PC-9 (cell line): ENCODE measurements at regions of chr12 and their contacts with region 1.

Region 1: GRCh38 chr12:76020731-76021672 is 10.6 kb downstream of the PHLDA1 start:
- DNase-seq: peak; percentile 58 to 95
- H3K4me3 ChIP-seq: peak overlapping the region; percentile 55
- H3K27ac ChIP-seq: peak overlapping the region; percentile 100
- H3K4me1 ChIP-seq: peaks cover 79% of the 10 kb centered on the region
- H3K27me3 ChIP-seq: no peaks in the 10 kb centered on the region
- CTCF ChIP-seq: no peak

Region 2: DNA sequence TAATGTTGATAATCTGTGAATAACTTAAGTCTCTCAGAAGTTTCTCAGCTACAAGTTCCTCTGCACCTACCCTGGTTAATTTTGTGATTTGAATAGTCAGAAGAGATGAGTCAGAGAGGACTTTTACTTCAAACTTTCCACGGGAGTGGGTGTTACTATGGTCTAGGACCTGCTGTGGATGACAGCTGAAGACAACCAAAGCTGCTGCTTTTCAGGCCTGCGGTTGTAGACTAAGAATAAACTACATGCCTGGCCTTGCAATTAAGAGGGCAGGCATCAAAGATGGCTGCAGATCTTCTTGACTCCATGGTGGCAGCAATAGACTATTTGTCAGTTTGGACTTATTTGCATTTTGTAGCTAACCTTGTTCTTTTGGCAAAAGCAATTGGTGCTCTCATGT is 282.5 kb before region 1 on chr12:
- CTCF ChIA-PET with region 1: no interaction called
- POLR2A ChIA-PET with region 1: interaction called, 11 read pairs
- intact Hi-C with region 1: no loop called
- DNase-seq: no peak
- H3K4me3 ChIP-seq: no peak overlapping the region
- H3K27ac ChIP-seq: no peak overlapping the region
- H3K4me1 ChIP-seq: no peaks in the 10 kb centered on the region
- H3K27me3 ChIP-seq: no peaks in the 10 kb centered on the region
- CTCF ChIP-seq: no peak

Region 3: DNA sequence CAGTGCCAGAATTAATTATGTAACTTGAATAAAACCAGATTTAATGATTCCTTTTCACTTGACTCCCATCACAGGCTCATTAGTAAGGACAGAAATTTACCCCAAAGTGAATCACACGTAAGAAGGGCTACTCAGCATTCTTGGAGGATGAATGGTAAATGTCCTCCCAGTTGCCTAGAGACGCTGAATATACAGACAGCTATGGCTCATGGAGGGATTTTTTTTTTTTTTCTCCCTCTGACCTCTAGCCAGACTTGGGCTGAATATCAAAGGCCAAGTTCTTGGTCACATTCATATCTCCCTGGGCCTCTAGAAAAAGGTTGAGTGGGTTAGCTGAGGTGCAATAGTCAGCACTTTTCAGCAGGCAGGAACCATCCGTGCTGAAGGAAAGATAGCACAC is 67.0 kb before region 1 on chr12:
- CTCF ChIA-PET with region 1: no interaction called
- POLR2A ChIA-PET with region 1: interaction called, 15 read pairs
- intact Hi-C with region 1: loop called (anchors 1 kb)
- DNase-seq: peak; percentile 57 to 99
- H3K4me3 ChIP-seq: peak overlapping the region; percentile 19; the same call in 1 of the 2 replicates
- H3K27ac ChIP-seq: peak overlapping the region; percentile 97
- H3K4me1 ChIP-seq: peaks cover 67% of the 10 kb centered on the region
- H3K27me3 ChIP-seq: no peaks in the 10 kb centered on the region
- CTCF ChIP-seq: no peak

Region 4: DNA sequence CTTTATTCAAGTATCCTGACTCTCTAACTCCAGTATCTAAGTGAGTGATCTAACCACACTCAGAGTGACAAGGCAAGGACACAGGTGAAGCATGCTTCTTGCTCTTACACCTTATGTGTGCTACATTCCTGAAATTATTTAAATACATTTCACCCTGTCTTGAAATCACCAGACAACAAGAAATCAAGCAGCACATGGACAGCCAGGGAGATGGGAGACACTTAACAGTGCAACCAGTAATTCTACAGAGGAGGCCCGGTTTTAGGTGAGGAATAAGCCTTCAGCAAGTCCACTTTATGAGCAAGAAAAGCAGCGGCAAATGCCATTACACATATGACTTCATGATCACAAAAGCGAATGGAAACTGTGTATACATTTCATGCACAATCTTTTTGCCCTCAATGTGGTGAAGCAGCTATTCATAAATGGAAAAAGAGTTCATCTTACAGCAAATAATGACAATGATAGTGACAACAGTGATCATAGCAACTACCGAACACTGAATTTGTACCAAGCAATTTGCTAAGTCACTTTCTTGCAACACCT is 26.7 kb before region 1 on chr12:
- CTCF ChIA-PET with region 1: interaction called, 8 read pairs
- POLR2A ChIA-PET with region 1: no interaction called
- intact Hi-C with region 1: loop called (anchors 1 kb)
- DNase-seq: peak; percentile 31 to 87
- H3K4me3 ChIP-seq: no peak overlapping the region
- H3K27ac ChIP-seq: peak overlapping the region; percentile 81
- H3K4me1 ChIP-seq: peaks cover 63% of the 10 kb centered on the region
- H3K27me3 ChIP-seq: no peaks in the 10 kb centered on the region
- CTCF ChIP-seq: no peak

Region 5: DNA sequence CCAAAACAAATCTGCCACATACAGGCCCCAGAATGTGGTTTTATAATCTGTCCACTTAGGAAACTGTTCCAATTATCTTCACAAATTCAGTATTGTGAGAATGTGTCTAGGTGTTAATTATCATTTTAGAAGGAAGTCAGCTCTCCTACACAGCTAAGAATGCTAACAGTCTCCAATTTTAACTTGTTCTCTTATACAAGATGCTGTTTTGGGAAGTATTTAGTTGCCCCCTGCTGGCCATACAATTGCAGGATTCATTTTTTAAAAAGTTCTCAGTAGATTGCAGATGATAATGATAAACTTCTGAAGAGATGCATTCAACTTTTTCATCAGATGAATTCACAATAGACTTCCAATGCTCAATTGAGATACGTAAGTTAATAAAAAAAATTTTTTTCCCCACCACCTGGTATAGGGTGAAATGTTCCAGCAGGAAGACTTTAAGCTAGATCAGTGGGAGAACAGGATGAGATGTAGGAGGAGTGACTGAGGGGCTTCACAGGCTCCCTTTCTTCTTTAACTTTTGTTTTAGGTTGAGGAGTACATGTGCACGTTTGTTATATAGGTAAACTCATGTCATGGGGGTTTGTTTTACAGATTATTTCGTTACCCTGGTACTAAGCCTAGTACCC is 565.9 kb after region 1 on chr12:
- CTCF ChIA-PET with region 1: no interaction called
- POLR2A ChIA-PET with region 1: interaction called, 12 read pairs
- intact Hi-C with region 1: no loop called
- DNase-seq: peak in 1 of 2 experiments; percentile 10
- H3K4me3 ChIP-seq: no peak overlapping the region
- H3K27ac ChIP-seq: no peak overlapping the region
- H3K4me1 ChIP-seq: no peaks in the 10 kb centered on the region
- H3K27me3 ChIP-seq: no peaks in the 10 kb centered on the region
- CTCF ChIP-seq: peak; percentile 82

Region 6: DNA sequence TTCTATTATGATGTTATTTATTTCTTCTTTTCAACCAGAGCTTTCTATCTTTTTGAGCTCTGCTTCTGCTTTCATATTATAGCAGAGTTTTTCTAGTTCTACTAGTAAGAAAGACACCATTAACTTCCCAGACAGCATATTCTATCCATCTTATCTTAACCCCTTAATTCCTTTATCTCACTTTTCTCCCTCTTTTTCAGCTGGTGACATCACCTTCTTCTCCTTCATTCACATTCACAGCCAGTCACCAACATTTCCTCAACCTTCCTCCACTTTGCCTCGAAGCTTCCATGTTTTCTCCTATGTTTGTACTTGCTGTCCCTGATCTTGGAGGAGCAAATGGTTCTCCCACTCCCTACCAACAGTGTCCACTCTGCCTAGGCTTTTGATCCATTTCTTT is 861.4 kb after region 1 on chr12:
- CTCF ChIA-PET with region 1: no interaction called
- POLR2A ChIA-PET with region 1: interaction called, 28 read pairs
- intact Hi-C with region 1: no loop called
- DNase-seq: no peak
- H3K4me3 ChIP-seq: no peak overlapping the region
- H3K27ac ChIP-seq: no peak overlapping the region
- H3K4me1 ChIP-seq: no peaks in the 10 kb centered on the region
- H3K27me3 ChIP-seq: no peaks in the 10 kb centered on the region
- CTCF ChIP-seq: no peak